ENCODE measurements at regions of chr1 and their contacts with region 1.

Region 1: GRCh38 chr1:240732390-240732789 is 120.4 kb upstream of the GREM2 start:
- DNase-seq: peak; percentile 79
- H3K4me3 ChIP-seq: no peak overlapping the region
- H3K27ac ChIP-seq: no peak overlapping the region
- H3K4me1 ChIP-seq: peaks cover 8% of the 10 kb centered on the region
- H3K27me3 ChIP-seq: no peaks in the 10 kb centered on the region

Region 2: DNA sequence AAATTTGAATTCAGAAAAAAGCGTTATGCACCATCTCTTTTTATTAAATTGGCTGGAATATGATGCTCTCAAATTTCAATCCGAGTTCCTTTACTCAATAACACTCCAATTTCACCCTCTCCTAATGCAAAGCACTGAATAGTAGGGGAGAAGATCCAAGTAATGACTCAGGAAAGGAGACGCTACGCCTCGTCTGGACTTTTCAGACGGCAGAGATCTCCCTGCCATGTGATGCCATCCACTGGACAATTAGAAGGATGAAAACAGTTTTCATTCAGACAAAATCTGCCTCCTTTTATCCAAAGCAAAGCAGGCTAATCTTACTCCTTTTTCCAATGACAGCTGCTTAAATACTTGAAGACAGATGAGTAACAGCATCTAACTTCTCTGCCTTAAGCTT is 122.0 kb after region 1 on chr1:
- in situ Hi-C with region 1: loop called (anchors 10 kb)
- DNase-seq: peak; percentile 92
- H3K4me3 ChIP-seq: no peak overlapping the region
- H3K27ac ChIP-seq: peak overlapping the region; percentile 29; the same call in 1 of the 2 replicates
- H3K4me1 ChIP-seq: peaks cover 17% of the 10 kb centered on the region
- H3K27me3 ChIP-seq: no peaks in the 10 kb centered on the region

Region 3: DNA sequence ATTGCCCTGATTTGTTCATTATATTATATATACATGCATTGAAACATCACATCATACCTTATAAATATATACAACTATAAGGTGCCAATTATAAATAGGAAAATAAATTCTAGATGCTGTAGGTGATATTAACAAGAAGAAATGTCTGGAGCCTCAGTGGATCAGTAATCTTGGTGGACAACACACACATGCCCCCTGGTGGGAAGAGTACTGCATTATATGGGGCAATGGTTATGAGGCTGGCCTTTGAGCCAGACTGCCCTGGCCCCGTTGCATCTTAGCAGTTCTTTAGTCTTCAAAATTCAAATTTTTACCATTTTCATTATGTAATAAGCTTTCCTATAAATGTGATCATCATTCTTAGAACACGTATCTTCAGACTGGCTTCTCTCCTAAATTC is 214.5 kb after region 1 on chr1:
- in situ Hi-C with region 1: loop called (anchors 10 kb)
- DNase-seq: peak; percentile 82
- H3K4me3 ChIP-seq: no peak overlapping the region
- H3K27ac ChIP-seq: no peak overlapping the region
- H3K4me1 ChIP-seq: no peaks in the 10 kb centered on the region
- H3K27me3 ChIP-seq: no peaks in the 10 kb centered on the region

Region 4: GRCh38 chr1:241499910-241500309 is 767.5 kb after region 1 on chr1:
- in situ Hi-C with region 1: loop called (anchors 10 kb)
- DNase-seq: peak; percentile 54
- H3K4me3 ChIP-seq: no peak overlapping the region
- H3K27ac ChIP-seq: no peak overlapping the region
- H3K4me1 ChIP-seq: no peaks in the 10 kb centered on the region
- H3K27me3 ChIP-seq: no peaks in the 10 kb centered on the region